ENCODE measurements at regions of chr17 and their contacts with region 1.

Region 1: DNA sequence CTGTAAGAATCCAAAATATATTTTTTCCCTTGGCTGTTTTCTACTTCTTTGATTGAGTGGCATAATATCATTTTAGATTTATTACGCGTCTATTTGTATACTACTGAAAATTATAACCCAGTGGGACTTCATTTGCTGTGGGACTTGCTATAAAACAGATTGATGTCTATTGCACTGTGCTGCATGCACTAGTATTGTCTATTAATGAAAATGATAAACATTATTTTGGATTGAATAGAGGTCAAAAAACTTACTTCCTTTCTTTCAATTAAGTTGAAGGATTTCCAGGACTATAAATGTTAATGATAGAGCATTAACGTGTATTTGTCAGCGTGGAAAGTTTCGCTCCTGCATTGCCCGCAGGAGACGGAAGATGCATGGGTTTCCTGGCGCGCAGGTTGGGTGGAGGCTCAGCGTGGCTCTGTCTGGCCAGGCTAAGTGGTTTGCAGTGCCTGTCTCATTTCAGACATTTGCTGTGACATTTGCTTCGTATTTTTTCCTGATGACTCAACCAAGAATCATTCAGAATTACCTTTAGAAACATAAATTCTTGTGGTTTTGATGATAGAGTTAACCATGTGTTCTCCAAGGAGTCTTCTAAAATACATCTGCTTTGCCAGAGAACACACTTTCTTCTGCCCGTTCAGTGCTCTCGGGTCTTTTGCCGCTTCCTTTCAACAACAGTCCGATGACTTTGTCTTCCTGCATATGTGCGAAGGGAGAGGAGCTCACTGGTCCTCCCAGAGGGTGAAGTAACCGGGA is 216.7 kb downstream of the RPTOR start:
- DNase-seq: peak; percentile 81
- H3K4me3 Mint-ChIP-seq: peak overlapping the region; percentile 63
- H3K27ac Mint-ChIP-seq: peak overlapping the region; percentile 98
- H3K4me1 Mint-ChIP-seq: peaks cover 79% of the 10 kb centered on the region
- H3K27me3 Mint-ChIP-seq: no peaks in the 10 kb centered on the region

Region 2: DNA sequence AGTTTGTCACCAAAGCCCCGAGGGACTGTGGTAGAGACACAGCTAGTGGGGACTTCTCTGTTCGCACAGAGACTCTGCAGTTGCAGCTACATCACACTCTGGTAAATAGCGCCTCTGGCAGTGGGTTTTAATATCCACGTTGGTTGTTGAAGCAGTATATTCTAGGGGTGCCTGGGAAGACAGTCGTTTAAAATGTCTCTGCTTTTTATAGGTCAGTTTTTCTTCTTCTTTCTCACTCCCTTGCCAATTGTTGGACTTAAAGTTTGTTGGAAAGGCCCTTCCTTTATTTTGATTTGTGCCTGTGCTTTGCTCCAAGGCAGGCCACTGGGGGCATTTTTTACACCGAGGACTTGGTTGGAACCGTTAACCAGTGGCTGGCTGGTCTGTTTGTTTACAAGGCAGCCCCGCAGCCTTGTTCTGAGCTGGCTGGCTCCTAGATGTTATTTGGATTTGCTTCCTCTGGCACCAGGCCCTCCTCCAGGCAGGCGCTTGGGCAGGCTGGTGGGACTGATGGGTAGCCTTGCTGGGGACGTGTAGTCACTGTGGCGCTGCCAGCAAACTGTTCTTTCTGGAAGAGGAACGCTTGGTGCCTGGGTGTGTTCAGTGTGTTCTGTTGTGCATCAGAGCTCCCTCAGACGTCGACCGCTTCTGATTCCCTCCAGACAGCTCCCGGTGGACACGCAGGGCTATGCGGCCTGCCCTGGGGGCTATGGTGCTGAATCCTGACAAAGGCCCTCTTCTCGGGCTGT is 12.1 kb after region 1 on chr17:
- CTCF ChIA-PET with region 1: interaction called, 6 read pairs
- POLR2A ChIA-PET with region 1: interaction called, 13 read pairs
- DNase-seq: no peak
- H3K4me3 Mint-ChIP-seq: no peak overlapping the region
- H3K27ac Mint-ChIP-seq: no peak overlapping the region
- H3K4me1 Mint-ChIP-seq: peaks cover 53% of the 10 kb centered on the region
- H3K27me3 Mint-ChIP-seq: no peaks in the 10 kb centered on the region